Activated CD4-positive, alpha-beta memory T cell treated with anti-CD3 and anti-CD28 coated beads for 36 hours (primary cell): ENCODE measurements at regions of chr11 and their contacts with region 1.

Region 1: DNA sequence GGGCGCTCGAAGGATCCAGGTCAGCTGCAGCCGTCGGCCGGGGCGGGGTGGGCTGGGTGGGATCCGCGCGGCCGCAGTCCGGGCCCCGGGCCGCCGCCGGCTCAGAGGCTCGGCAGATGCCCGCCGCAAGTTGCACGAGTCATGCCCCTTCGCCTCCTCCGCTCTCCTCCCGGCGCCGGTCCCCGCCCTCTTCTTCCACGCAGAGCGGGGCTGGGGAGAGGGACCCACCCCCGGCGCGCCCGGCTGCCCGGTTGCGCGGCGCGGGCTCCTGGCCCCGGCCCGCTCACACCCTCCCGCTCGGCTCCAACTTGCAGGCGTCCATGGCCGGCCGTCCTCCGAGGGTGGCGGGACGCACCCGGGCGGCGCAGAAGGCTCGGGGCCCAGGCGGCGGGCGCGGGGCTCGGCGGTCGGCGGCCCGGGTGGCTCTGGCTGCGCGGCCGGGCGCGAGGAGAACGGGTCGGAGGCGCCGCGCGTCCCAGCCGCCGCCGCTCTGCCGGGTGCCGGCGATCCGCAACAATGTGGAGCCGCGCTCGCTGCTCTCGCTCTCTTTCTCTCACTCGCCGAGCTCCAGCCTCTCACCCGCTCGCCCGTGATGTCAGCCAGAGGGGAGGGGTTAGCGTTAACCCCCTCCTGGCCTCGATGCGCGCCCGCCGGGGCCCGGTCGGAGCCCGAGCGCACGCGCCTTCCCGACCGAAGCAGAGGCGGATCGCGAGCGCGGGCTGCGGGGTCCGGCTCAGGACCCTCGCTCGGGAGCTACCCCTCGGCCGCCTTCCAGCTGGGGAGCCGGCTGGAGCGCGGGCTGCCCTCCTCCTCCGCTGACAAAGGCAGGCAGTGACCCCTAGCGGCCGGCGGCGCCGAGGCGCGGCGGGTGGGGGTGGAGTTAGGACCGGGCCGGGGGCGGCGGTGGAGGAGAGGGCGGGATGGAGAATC is at the start of gene NECTIN1:
- DNase-seq: peak; percentile 89
- H3K4me3 Mint-ChIP-seq: peak within 1 kb of the TSS; percentile 76
- H3K27ac Mint-ChIP-seq: peak within 1 kb of the TSS; percentile 28
- H3K4me1 Mint-ChIP-seq: peaks cover 16% of the 10 kb centered on the region
- H3K27me3 Mint-ChIP-seq: peaks cover 13% of the 10 kb centered on the region
- total RNA-seq, gene NECTIN1: 2.0 to 2.4 TPM

Region 2: DNA sequence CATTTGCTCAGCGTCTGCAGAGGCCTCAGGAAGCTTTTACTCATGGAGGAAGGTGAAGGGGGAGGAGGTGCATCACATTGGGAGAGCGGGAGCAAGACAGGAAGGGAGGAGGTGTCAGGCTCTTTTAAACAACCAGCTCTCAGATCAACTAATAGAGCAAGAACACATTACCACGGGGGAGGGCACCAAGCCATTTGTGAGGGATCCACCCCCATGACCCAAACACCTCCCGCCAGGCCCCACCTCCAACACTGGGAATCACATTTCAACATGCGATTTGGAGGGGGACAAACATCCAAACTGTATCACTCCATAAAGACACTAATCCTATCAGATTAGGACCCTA is 287.0 kb before region 1 on chr11:
- CTCF ChIA-PET with region 1: no interaction called
- POLR2A ChIA-PET with region 1: no interaction called
- intact Hi-C with region 1: loop called (anchors 2 kb)
- DNase-seq: no peak
- H3K4me3 Mint-ChIP-seq: no peak overlapping the region
- H3K27ac Mint-ChIP-seq: no peak overlapping the region
- H3K4me1 Mint-ChIP-seq: peaks cover 12% of the 10 kb centered on the region
- H3K27me3 Mint-ChIP-seq: peaks cover 31% of the 10 kb centered on the region

Region 3: DNA sequence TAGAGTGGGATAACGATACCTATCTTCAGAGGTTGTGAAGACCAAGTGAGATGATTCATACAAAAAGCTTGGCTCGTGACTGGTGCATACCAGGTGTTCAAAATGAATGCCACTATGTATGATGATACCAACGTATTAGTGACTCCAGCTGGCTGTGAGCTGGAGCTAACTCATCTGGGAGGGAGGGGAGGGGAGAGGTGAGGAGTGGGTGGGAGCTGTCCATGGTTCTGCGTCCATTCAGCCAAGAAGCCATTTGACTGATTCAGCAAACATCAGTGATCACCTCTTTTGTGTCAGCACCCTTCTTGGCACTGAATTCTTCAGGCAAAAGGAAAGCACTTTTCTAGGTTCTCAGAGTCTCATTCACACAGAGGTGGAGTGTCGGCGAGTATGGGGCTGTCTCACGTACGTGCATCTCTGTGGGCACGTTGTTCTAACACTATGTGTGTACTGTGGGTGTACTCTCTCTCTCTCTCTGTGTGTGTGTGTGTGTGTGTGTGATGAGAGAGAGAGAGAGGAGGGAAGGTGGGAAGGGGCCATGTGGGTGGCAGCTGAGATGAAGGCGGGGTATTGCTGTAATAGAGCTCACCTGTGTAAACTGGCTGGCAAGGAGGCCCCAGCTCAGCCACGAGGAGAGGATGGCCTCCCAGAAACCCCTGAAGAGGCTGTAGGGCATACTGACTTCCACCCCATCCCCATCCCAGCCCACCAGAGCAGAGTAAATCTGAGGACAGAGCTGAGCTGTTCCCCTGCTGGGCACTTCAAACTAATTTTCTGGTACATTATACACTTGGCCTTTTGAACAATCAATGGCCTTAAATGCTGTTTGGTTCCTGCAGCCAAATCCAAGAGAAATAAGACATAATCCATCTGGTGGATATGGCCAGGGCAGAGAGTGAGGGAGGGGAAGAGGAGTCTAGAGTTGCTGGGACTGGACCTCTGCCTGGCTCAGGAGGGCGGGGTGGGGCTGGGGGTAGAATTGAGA is 209.9 kb before region 1 on chr11:
- CTCF ChIA-PET with region 1: no interaction called
- POLR2A ChIA-PET with region 1: no interaction called
- intact Hi-C with region 1: no loop called
- DNase-seq: peak; percentile 57
- H3K4me3 Mint-ChIP-seq: no peak overlapping the region
- H3K27ac Mint-ChIP-seq: no peak overlapping the region
- H3K4me1 Mint-ChIP-seq: no peaks in the 10 kb centered on the region
- H3K27me3 Mint-ChIP-seq: peaks cover 14% of the 10 kb centered on the region

Region 4: GRCh38 chr11:119666463-119667131 is 62.3 kb before region 1 on chr11:
- CTCF ChIA-PET with region 1: interaction called, 11 read pairs
- POLR2A ChIA-PET with region 1: no interaction called
- intact Hi-C with region 1: loop called (anchors 1 kb)
- DNase-seq: peak; percentile 74
- H3K4me3 Mint-ChIP-seq: no peak overlapping the region
- H3K27ac Mint-ChIP-seq: no peak overlapping the region
- H3K4me1 Mint-ChIP-seq: no peaks in the 10 kb centered on the region
- H3K27me3 Mint-ChIP-seq: no peaks in the 10 kb centered on the region

Region 5: GRCh38 chr11:119694334-119694733 is 34.6 kb before region 1 on chr11:
- CTCF ChIA-PET with region 1: interaction called, 22 read pairs
- POLR2A ChIA-PET with region 1: no interaction called
- intact Hi-C with region 1: no loop called
- DNase-seq: peak; percentile 15
- H3K4me3 Mint-ChIP-seq: no peak overlapping the region
- H3K27ac Mint-ChIP-seq: no peak overlapping the region
- H3K4me1 Mint-ChIP-seq: peaks cover 12% of the 10 kb centered on the region
- H3K27me3 Mint-ChIP-seq: no peaks in the 10 kb centered on the region

Region 6: DNA sequence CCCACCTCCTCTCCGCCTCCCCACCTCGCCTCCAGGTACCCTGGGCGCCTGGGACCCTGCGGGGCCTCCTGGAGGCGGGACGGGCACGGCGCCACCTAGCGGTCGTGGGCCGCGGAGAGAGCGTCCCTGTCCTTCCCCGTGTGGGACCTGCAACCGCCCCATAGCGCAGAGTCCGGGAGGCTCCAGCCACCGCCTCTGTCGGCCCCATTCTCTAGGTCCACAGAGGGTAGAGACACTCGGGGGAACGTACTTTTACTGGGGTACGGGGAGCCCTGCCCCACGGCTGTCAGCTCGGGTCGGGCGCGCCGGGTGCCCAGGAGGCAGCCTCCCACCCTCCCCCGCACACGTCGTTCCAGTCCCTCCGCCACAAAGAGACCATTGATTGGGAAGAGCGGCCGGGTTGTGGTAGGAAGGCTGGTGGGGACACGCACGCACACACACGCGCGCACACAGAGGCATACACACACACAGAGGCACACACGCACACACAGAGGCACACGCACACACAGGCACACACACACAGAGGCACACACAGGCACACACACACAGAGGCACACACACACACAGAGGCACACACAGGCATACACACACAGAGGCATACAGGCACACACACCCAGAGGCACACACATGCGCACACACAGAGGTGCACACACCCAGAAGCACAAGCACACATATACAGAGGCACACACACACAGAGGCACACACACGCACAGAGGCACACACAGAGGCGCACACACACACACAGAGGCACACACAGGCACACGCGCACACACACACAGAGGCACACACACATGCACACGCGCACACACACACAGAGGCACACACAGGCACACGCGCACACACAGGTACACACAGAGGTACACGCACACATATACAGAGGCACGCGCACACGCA is 12.7 kb after region 1 on chr11:
- CTCF ChIA-PET with region 1: interaction called, 22 read pairs
- POLR2A ChIA-PET with region 1: no interaction called
- intact Hi-C with region 1: no loop called
- DNase-seq: peak; percentile 72
- H3K4me3 Mint-ChIP-seq: peak overlapping the region; percentile 4
- H3K27ac Mint-ChIP-seq: no peak overlapping the region
- H3K4me1 Mint-ChIP-seq: peaks cover 9% of the 10 kb centered on the region
- H3K27me3 Mint-ChIP-seq: peaks cover 49% of the 10 kb centered on the region

Region 7: DNA sequence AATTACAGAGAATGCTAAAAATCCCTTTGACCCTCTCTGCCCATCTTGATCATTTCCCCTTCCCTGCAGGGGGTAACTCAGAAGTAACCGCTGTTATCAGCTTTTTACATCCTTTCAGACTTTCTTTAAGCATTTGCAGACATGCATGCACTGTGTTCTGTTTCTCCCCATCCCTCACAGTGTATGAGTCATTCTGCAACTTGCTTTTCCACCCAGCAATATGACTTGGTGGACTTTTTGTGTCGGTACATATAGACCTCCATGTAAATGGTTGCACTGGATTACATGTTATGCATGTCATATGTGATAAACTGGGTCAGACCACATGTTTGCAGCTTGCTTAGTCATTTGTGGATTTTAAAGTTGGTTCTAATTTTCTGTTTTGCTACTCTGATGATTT is 87.7 kb after region 1 on chr11:
- CTCF ChIA-PET with region 1: no interaction called
- POLR2A ChIA-PET with region 1: no interaction called
- intact Hi-C with region 1: no loop called
- DNase-seq: no peak
- H3K4me3 Mint-ChIP-seq: no peak overlapping the region
- H3K27ac Mint-ChIP-seq: no peak overlapping the region
- H3K4me1 Mint-ChIP-seq: no peaks in the 10 kb centered on the region
- H3K27me3 Mint-ChIP-seq: peaks cover 13% of the 10 kb centered on the region

Region 8: DNA sequence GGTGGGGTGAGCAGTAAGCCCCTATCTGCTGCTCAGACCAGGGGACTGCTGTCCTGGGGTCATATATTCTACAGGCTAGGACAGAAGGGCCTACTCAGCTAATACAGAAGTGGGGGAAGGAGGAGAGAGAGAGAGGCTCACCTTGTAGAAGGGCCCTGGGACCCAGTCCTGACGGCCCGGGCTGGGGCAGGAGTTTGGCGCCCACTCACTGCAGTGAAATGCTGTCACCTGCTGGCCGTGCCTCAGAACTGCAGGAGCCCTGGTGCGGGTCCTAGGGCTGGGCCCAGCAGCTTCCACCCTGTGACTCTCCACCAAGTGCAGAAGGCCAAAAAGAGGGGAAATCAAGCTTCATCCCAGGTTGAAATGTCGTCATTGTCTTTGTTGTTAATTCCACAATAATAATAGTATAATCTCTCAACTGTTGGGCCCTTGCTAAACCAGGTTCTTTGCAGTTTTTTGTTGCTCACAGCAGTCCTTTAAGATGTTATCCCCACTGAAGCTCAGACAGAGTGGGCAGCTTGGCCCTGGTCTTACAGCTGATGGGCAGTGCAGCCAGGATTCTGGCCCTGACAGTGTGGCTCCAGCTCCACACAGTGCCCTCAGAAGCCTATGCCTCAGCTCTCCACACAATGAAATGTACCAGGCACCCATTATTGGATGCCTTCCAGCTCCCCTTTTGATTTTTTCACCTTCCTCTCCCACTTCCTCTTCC is 379.4 kb after region 1 on chr11:
- CTCF ChIA-PET with region 1: interaction called, 10 read pairs
- POLR2A ChIA-PET with region 1: no interaction called
- intact Hi-C with region 1: loop called (anchors 1 kb)
- DNase-seq: peak; percentile 72
- H3K4me3 Mint-ChIP-seq: no peak overlapping the region
- H3K27ac Mint-ChIP-seq: no peak overlapping the region
- H3K4me1 Mint-ChIP-seq: no peaks in the 10 kb centered on the region
- H3K27me3 Mint-ChIP-seq: peaks cover 8% of the 10 kb centered on the region